Activated CD4-positive, alpha-beta memory T cell treated with anti-CD3 and anti-CD28 coated beads for 36 hours (primary cell): ENCODE measurements at regions of chr15 and their contacts with region 1.

Region 1: DNA sequence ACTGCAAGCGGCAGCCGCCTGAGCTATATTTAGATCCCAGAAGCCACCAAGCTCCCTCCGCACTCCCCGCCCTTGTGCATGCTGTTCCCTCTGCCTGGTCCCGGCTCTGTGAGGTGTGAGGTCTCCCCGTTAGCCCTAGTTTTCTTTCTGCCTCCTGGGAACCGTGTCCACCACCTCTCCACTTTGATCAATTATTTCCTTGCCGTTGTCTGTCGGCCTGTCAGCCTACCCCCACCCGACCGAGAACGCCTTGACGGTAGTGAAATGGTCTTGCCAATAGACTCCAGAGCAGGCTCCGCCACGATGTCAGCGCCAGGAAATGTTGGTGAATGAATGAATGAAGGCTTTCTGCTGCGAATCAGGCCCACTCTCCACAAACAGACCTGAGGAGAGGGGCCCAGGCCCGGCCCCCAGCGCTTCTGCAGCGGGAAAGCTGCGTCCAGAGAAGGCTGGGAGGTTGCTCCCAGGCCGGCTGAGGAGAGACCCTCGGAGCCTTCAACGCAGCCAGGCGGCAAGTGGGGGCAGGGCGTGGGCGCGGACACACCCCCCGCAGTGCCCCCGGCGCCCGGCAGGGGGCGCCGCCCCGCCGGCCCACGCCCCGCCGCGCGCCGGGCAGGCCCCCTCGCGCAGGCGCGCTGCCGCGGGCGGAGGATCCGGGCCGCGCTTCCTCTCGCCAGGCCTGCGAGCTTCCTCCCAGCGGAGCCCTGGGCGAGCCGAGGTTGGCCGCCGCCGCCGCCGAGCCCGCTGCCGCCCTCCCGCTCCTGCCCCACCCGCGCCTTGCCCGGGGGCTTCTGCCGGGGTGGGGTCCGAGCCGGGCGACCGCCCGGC is at the start of gene CSK:
- DNase-seq: peak; percentile 83
- H3K4me3 Mint-ChIP-seq: peak within 1 kb of the TSS; percentile 90
- H3K27ac Mint-ChIP-seq: peak within 1 kb of the TSS; percentile 99
- H3K4me1 Mint-ChIP-seq: peaks cover 50% of the 10 kb centered on the region
- H3K27me3 Mint-ChIP-seq: no peaks in the 10 kb centered on the region
- total RNA-seq, gene CSK: 260 to 262 TPM

Region 2: GRCh38 chr15:74716644-74717043 is 65.0 kb before region 1 on chr15:
- CTCF ChIA-PET with region 1: no interaction called
- POLR2A ChIA-PET with region 1: no interaction called
- intact Hi-C with region 1: no loop called
- DNase-seq: no peak
- H3K4me3 Mint-ChIP-seq: no peak overlapping the region
- H3K27ac Mint-ChIP-seq: no peak overlapping the region
- H3K4me1 Mint-ChIP-seq: no peaks in the 10 kb centered on the region
- H3K27me3 Mint-ChIP-seq: no peaks in the 10 kb centered on the region

Region 3: DNA sequence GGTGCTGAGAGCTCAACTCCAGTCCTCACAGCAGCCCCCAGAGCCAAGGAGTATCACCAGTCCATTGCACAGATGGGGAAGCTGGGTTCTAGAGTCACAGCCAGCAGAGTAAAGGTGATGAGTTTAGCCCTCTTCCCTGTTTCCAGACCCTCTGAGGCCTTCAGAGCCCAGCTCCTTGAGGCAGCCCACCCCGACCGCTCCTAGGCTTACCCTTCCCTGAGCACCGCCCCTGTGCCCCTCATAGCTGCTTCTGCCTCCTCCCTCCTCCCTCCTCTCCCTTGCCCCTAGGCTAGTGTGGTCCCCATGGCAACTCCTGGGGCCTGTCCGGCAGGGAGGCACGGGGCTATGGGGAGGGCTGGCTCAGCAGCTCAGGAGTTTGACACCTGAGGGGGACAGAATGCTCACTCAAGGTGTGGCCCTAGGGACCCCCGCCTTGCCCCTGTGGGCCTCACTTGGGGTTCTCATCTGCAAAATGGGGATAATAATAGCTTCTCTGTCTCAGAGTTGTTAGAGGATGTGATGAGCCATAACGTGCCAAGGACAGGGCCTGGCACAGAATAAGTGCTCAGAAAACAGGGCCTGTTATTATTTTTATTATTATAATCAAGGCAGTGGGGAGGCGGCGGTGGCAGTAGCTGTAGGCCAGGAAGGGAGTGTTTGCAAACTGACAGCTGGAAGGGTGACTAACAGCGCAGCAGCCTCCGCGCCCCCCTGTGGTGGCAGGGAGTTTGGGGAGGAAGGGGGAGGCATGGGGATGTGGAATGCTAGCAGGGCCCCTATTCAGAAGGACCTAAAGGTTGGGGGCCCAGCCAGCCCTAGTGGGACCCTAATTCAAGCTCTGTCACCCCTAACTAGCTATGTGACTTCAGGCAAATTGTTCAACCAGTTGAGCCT is 11.7 kb after region 1 on chr15:
- CTCF ChIA-PET with region 1: interaction called, 1,220 read pairs
- POLR2A ChIA-PET with region 1: interaction called, 116 read pairs
- intact Hi-C with region 1: loop called (anchors 1 kb)
- DNase-seq: peak; percentile 81
- H3K4me3 Mint-ChIP-seq: peak overlapping the region; percentile 29
- H3K27ac Mint-ChIP-seq: peak overlapping the region; percentile 99
- H3K4me1 Mint-ChIP-seq: peaks cover 88% of the 10 kb centered on the region
- H3K27me3 Mint-ChIP-seq: no peaks in the 10 kb centered on the region

Region 4: GRCh38 chr15:74799856-74800547 is 18.4 kb after region 1 on chr15:
- CTCF ChIA-PET with region 1: interaction called, 1,220 read pairs
- POLR2A ChIA-PET with region 1: interaction called, 116 read pairs
- intact Hi-C with region 1: loop called (anchors 1 kb)
- DNase-seq: peak; percentile 93
- H3K4me3 Mint-ChIP-seq: no peak overlapping the region
- H3K27ac Mint-ChIP-seq: peak overlapping the region; percentile 91
- H3K4me1 Mint-ChIP-seq: peaks cover 49% of the 10 kb centered on the region
- H3K27me3 Mint-ChIP-seq: no peaks in the 10 kb centered on the region

Region 5: GRCh38 chr15:74842581-74843444 is 61.2 kb after region 1 on chr15 and contains the start of gene ULK3:
- CTCF ChIA-PET with region 1: interaction called, 4 read pairs
- POLR2A ChIA-PET with region 1: interaction called, 3 read pairs
- intact Hi-C with region 1: loop called (anchors 5 kb)
- DNase-seq: peak; percentile 95
- H3K4me3 Mint-ChIP-seq: peak within 1 kb of the TSS; percentile 92
- H3K27ac Mint-ChIP-seq: peak within 1 kb of the TSS; percentile 93
- H3K4me1 Mint-ChIP-seq: peaks cover 44% of the 10 kb centered on the region
- H3K27me3 Mint-ChIP-seq: no peaks in the 10 kb centered on the region
- total RNA-seq, gene ULK3: 51.4 to 57.6 TPM

Region 6: GRCh38 chr15:74950078-74951000 is 168.7 kb after region 1 on chr15:
- CTCF ChIA-PET with region 1: interaction called, 11 read pairs
- POLR2A ChIA-PET with region 1: no interaction called
- intact Hi-C with region 1: no loop called
- DNase-seq: peak; percentile 86
- H3K4me3 Mint-ChIP-seq: no peak overlapping the region
- H3K27ac Mint-ChIP-seq: no peak overlapping the region
- H3K4me1 Mint-ChIP-seq: peaks cover 9% of the 10 kb centered on the region
- H3K27me3 Mint-ChIP-seq: no peaks in the 10 kb centered on the region

Region 7: DNA sequence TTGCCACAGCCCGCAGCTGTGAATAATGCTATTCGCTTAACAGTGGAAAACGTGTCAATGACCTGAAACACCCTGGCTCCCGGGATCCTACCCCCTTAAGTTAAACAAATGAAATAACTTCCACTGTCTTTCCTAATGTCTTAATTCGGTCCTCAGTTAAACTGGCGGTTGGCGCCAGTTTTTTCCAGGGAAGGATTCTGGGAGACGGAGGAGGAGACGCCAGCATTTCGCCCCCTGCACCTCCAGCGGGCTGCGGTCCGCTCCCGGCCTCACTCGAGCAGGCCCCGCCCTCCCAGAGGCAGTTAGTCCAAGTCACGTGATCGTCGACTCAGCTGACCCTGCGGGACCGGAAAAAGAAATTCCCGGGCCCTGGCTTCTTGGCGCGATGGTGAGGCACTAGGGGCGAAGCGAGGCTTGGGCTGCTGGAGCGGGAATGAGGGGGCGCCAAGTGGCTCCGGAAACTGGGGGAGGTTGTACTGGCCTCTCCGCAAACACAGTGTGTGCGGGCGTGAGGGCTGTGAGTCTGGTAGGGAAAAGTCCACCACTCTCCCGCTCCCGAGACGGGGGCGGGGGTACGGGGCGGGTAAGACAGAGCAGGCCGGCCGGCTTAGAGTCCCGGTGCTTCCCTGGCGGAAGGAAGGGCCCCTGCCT is 554.2 kb after region 1 on chr15 and contains the start of gene COMMD4:
- CTCF ChIA-PET with region 1: no interaction called
- POLR2A ChIA-PET with region 1: no interaction called
- intact Hi-C with region 1: no loop called
- DNase-seq: peak; percentile 93
- H3K4me3 Mint-ChIP-seq: peak within 1 kb of the TSS; percentile 97
- H3K27ac Mint-ChIP-seq: peak within 1 kb of the TSS; percentile 84
- H3K4me1 Mint-ChIP-seq: peaks cover 19% of the 10 kb centered on the region
- H3K27me3 Mint-ChIP-seq: peaks cover 2% of the 10 kb centered on the region
- total RNA-seq, gene COMMD4: 83.3 to 87.8 TPM